GM18951 (cell line): ENCODE measurements at regions of chr13 and their contacts with region 1.

Region 1: DNA sequence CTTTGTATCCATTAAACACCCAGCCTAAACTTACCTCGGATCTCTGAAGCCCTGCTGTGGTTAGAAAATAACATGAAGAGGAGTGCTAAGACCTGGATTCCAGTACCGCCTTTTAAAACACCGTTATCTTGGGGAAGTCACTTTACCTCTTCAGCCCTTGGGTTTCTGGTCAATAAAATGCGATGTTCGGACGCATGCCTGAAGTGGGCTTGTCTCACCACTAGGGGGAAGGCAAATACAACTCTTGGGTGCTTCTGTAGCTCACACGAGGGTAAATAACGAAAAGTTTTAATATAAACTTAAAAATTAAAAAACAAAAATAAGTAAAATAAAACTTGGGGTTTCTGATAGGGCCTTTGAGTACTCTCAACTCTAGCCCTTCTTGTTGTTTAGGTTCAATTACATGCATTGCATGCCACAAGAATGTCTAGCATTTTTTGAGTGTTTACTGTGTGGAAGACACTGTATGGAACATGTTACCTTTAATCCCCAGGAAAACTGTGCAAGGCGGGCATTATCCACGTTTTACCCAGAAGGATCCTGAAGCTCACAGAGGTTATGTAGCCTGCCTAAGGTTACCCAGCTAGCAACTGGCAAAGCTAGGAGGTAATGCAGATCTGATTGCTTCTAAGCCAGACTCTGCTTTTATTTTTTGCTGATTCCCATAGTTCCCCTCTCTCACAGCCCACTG is 240.4 kb downstream of the LMO7 start:
- POLR2A ChIP-seq: no peak

Region 2: GRCh38 chr13:76016799-76017400 is 140.4 kb after region 1 on chr13:
- in situ Hi-C with region 1: loop called (anchors 10 kb)
- POLR2A ChIP-seq: no peak

Region 3: GRCh38 chr13:76473552-76474134 is 597.1 kb after region 1 on chr13:
- in situ Hi-C with region 1: loop called (anchors 10 kb)
- POLR2A ChIP-seq: no peak

Region 4: DNA sequence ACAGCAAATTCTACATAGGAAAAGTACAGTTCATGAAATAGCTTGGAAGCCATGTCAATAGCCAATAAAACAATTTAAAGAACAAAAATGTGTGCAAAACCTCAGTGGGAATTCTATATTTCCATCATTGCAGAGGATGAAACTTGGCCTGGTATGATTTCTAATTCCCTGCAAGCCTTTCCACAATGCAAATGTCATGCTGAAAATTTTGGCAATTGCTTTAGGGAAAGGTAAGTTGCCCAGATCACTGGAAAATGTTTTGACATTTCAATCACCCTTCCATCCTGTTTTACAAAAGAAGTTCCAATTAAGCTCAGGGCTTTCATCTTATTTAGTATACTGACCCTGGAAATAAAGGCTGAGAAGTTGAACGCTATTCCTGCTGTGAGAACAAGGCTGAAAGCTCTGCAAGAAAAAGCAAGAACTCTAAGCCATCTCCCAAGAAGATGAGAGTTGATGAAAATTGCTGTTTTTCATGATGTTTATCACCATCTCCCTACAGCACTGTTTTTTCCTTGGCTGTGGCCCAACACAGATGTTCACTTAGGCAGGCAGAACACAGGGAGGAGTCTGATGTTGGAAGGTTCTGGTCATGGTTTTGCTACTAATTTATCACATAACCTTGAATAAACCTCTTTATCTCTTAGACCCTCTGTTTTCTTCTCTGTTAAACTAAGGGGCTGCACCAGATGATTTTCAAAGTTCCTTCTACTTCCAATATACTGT is 746.0 kb after region 1 on chr13:
- in situ Hi-C with region 1: no loop called
- POLR2A ChIP-seq: no peak

Region 5: DNA sequence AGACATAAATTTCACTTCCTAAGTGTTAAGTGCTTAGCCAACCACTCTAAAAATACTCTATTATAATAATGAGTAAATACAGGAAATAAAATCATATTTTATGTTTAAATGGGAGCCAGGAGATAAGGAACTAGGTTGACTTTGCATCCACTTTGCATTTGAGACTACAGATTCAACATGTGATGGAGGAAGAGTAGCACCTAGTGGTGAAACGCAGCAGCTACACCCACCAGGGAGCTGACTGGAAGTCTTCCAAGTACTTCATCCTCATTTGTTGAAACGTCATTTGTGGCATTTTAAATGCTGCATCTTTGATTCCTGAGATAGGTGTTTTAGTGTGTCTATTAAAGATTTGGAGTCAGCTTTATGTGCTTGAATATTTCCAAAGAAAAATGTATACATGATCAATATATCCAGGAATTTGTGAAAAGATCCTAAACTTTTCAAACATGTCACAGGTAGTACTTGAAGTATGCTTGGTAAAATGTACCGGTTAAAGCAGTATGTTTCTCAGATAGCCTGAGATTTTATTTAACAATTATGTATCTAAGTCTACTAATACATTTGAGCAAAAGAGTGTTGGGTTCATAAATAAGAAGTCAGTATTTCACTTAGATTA is 1027.1 kb after region 1 on chr13:
- in situ Hi-C with region 1: loop called (anchors 25 kb)
- POLR2A ChIP-seq: no peak